Common myeloid progenitor, CD34-positive (primary cell): ENCODE measurements at regions of chr7 and their contacts with region 1.

Region 1: DNA sequence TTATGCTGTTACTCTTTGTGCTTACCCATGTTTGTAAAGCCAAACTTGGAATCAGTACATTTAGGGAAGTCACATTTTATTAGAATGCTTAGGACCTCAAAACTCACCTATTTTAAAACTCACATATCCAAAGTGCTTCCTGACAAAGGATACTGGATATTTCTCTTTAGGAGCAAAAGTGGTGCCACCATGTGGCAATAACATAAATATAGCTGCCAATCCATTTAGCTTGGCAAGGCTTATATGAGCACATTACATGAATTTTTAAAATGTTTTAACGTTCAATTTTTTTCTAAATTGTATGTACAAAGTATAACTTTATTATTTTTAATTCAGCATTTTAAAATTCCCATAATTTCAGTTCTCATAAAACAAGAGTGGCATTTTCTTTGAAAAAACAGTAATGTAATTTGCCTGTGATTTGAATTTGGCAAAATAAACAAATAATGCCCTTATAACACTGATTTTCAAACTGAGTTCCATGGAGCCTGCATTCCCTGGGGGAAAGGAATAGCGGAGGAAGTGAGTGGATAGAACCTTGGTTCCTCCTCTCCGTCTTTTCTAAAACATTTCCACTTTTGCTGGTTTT is 75.4 kb downstream of the HDAC9 start:
- DNase-seq: peak; percentile 22 to 36 (median 28)
- H3K4me3 ChIP-seq: no peak overlapping the region
- H3K27ac ChIP-seq: no peak overlapping the region
- H3K4me1 ChIP-seq: no peaks in the 10 kb centered on the region
- H3K27me3 ChIP-seq: no peaks in the 10 kb centered on the region

Region 2: GRCh38 chr7:18547509-18548187 is 23.3 kb before region 1 on chr7:
- CTCF ChIA-PET with region 1: no interaction called
- POLR2A ChIA-PET with region 1: no interaction called
- DNase-seq: peak in 1 of 3 donors; percentile 23
- H3K4me3 ChIP-seq: no peak overlapping the region
- H3K27ac ChIP-seq: no peak overlapping the region
- H3K4me1 ChIP-seq: peaks cover 9 to 17% (median 12%) of the 10 kb centered on the region in 4 experiments
- H3K27me3 ChIP-seq: no peaks in the 10 kb centered on the region

Region 3: GRCh38 chr7:18558503-18558902 is 12.5 kb before region 1 on chr7:
- CTCF ChIA-PET with region 1: interaction called, 15 read pairs
- POLR2A ChIA-PET with region 1: no interaction called
- DNase-seq: no peak
- H3K4me3 ChIP-seq: no peak overlapping the region
- H3K27ac ChIP-seq: no peak overlapping the region
- H3K4me1 ChIP-seq: peaks cover 0 to 4% (median 2%) of the 10 kb centered on the region in 4 experiments
- H3K27me3 ChIP-seq: no peaks in the 10 kb centered on the region

Region 4: GRCh38 chr7:18610331-18610948 is 39.5 kb after region 1 on chr7:
- CTCF ChIA-PET with region 1: no interaction called
- POLR2A ChIA-PET with region 1: no interaction called
- DNase-seq: peak; percentile 4 to 14 (median 10)
- H3K4me3 ChIP-seq: no peak overlapping the region
- H3K27ac ChIP-seq: no peak overlapping the region
- H3K4me1 ChIP-seq: no peaks in the 10 kb centered on the region
- H3K27me3 ChIP-seq: no peaks in the 10 kb centered on the region